ENCODE measurements at regions of chr3 and their contacts with region 1.

Region 1: DNA sequence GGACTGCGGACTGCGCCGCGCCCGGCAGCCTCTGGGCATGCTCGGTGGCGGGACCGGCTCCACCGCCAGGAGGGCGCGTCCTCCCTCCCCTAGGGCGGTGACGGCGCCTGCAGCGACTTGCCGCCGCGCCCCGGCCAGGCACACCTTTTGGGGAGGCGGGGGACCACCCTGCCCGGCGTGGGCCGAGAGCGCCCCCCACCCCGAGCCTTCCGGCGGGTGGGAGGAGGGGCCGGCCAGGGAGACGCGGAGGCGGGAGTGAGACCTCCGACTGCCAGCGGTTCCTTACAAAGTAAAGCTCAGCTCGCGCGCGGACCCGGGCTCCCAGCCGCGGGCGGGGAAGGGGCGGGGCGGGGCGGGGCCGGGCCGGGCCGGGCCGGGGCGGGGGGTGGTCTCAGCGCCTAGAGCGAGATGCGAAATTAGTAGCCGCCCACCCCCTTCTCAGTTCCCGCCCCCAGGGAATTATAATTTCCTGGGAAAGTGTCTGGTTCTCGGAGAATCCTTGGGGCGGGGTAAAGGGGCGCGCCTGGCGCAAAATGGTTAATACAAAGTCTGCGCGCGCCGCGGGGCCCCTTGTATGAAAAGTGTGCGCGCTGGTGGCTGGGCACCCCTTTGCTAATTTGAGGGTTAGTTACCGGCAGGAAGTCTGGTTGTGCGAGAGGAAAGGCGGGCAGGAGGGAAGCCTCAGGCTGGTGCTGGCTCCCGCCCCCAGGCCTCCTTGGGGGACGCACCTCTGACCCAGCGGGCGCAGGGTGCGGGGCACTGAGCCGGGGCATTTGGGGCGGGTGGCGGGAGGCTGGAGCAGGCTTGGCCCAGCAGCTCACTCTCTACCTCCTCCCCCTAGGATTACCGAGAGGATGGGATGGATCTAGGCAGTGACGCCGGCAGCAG is 224.8 kb upstream of the IL12A start:
- H3K4me3 ChIP-seq: peak overlapping the region; percentile 67
- H3K27ac ChIP-seq: peak overlapping the region; percentile 97
- H3K4me1 ChIP-seq: no peaks in the 10 kb centered on the region
- CTCF ChIP-seq: peak; percentile 57

Region 2: DNA sequence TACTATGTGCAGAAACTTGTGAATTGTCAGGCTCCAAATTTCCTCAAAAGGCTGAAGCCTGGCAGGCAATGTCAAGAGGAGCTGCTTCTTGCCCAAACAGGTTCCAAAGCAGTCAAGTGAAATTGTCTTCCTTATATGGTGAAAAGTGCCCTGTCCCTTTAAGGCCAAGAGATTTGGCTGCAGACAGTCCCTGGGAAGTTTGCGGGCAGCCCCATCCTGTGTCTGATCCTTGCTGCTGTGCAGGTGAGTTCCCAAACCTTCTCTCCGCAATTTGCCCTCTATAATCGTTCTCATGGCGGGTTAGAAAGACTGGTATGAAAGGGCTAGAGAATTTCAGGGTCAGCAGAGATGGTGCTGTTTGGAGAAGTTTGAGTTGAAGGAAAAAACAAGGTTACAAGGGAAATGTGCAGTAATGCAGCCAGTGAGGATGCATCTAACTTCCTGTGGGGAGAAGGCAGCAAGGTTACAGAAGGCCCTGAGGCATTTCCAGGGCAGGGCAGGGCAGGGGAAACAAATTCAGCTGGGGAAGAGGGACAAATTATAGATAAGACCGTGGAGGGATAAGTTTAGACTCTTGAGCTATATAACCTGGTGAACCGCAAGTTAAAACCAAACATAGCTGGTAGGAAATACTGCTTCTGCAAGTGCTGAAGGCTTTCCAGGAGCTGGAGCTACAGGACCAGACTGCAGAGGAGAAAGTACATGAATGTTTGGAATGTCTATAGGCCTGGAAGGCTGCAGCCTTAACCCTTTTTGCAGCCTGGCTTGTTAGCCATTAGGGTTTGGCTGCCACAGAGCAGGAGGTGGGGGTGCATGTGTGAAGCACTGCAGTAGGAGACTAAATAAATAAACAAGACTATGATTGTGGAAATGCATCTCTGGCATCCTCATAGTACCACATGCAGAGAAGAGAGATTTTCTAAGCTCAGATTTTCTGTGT is 31.4 kb before region 1 on chr3:
- CTCF ChIA-PET with region 1: interaction called, 3 read pairs
- POLR2A ChIA-PET with region 1: interaction called, 17 read pairs
- H3K4me3 ChIP-seq: peak overlapping the region; percentile 37
- H3K27ac ChIP-seq: peak overlapping the region; percentile 49
- H3K4me1 ChIP-seq: peaks cover 5% of the 10 kb centered on the region; the same call in 1 of the 2 replicates
- CTCF ChIP-seq: no peak

Region 3: GRCh38 chr3:159787191-159787590 is 23.3 kb after region 1 on chr3:
- CTCF ChIA-PET with region 1: interaction called, 21 read pairs
- POLR2A ChIA-PET with region 1: interaction called, 15 read pairs
- H3K4me3 ChIP-seq: no peak overlapping the region
- H3K27ac ChIP-seq: peak overlapping the region; percentile 80
- H3K4me1 ChIP-seq: peaks cover 56% of the 10 kb centered on the region
- CTCF ChIP-seq: no peak

Region 4: DNA sequence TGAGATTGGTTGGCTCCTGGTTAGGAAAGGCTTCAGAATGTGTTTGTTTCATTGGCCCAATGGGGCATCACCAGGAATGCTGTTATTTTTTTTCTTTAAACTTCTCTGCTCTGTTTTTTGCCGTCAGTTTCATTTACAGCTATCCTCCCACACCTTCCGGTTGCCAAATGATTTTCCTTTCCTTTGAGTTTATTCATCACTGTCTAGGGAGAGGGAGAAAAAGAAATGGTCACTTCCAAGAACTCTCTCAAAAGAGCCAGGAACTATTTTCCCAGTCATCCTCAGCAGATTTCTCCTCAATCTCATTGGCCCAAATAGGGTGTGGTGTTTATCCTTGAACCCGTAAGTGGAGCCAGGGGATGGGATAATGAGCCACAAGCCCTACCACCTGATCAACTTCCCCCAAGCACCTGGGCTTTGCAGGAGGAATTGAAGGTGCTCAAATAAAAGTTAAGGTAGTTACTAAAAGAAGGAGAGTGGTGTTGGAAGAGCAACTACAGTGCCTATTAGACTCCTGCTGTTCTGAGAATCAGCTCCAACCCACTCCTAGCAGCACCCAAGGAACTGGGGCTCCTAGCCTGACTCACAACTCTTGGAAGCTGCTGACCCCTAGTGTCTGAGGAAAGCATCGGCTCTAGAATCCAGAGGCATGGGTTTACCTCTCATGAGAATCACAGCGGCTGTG is 41.0 kb after region 1 on chr3:
- CTCF ChIA-PET with region 1: interaction called, 10 read pairs
- POLR2A ChIA-PET with region 1: interaction called, 7 read pairs
- H3K4me3 ChIP-seq: no peak overlapping the region
- H3K27ac ChIP-seq: no peak overlapping the region
- H3K4me1 ChIP-seq: peaks cover 26% of the 10 kb centered on the region
- CTCF ChIP-seq: peak; percentile 76